Sigmoid colon (tissue), 7 donors: ENCODE measurements at regions of chr9 and their contacts with region 1.

Region 1: GRCh38 chr9:129080602-129081387 is at the start of gene DOLPP1:
- DNase-seq: peak; percentile 100
- H3K4me3 ChIP-seq: peak within 1 kb of the TSS; percentile 63 to 85 (median 80)
- H3K27ac ChIP-seq: peak within 1 kb of the TSS; percentile 83 to 92 (median 86)
- H3K4me1 ChIP-seq: peaks cover 0 to 23% (median 17%) of the 10 kb centered on the region in 4 donors
- H3K27me3 ChIP-seq: no peaks in the 10 kb centered on the region
- CTCF ChIP-seq: no peak
- EP300 ChIP-seq: no peak
- POLR2A ChIP-seq: peak; percentile 35 to 76
- total RNA-seq, gene DOLPP1: 2.3 to 4.3 (median 3.4) TPM

Region 2: DNA sequence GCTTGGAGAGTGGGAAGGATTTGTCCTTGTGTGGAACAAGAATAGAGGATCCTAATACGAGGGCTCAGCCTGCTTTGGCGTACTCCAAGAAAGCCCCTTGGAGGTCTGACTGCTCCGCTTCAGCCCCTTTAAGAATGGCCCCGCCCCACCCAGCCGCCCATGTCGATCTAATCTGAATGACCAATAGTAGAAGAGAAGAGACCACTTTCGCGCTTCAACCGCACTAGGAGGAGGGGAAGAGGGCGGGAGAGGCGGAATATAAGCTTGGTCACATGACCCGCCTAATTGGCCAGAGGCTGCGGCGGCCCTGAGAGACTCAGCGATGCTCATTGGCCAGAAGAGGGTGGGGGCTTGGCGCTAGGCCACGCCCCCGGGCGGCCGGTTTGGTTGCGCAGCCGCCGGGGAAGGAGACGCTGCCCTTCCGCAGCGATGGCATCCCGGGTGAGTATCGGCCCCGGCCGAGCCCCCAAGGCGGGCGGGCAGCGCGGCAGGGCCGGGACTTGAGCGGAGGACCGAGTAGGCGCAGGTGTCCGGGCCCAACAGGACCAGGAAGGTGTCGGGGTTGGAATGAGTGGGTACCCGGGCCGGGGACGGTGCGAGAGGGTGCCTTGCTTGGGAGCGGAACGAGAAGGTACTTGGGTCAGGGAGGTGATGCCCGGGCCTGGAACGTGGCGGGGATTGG is 44.4 kb before region 1 on chr9 and contains the start of gene MIGA2:
- intact Hi-C with region 1: loop called (anchors 5 kb)
- DNase-seq: peak; percentile 99
- H3K4me3 ChIP-seq: peak within 1 kb of the TSS; percentile 74 to 96 (median 84)
- H3K27ac ChIP-seq: peak within 1 kb of the TSS; percentile 84 to 88 (median 86)
- H3K4me1 ChIP-seq: peaks cover 0 to 25% (median 23%) of the 10 kb centered on the region in 4 donors
- H3K27me3 ChIP-seq: no peaks in the 10 kb centered on the region
- CTCF ChIP-seq: no peak
- EP300 ChIP-seq: no peak
- POLR2A ChIP-seq: peak; percentile 91 to 94
- total RNA-seq, gene MIGA2: 18.1 to 30.5 (median 25.1) TPM

Region 3: GRCh38 chr9:129160712-129161533 is 80.1 kb after region 1 on chr9:
- intact Hi-C with region 1: no loop called
- DNase-seq: no peak
- H3K4me3 ChIP-seq: no peak overlapping the region
- H3K27ac ChIP-seq: no peak overlapping the region
- H3K4me1 ChIP-seq: peaks cover 0 to 16% (median 9%) of the 10 kb centered on the region in 4 donors
- H3K27me3 ChIP-seq: no peaks in the 10 kb centered on the region
- CTCF ChIP-seq: no peak
- EP300 ChIP-seq: no peak
- POLR2A ChIP-seq: no peak